Natural killer cell (primary cell): ENCODE measurements at regions of chr9 and their contacts with region 1.

Region 1: GRCh38 chr9:34376596-34377403 is at the start of gene MYORG:
- DNase-seq: peak; percentile 80 to 97
- ATAC-seq: peak; percentile 71 to 86 (median 75)
- H3K4me3 ChIP-seq: peak within 1 kb of the TSS; percentile 54
- H3K4me3 Mint-ChIP-seq: peak within 1 kb of the TSS; percentile 90
- H3K27ac ChIP-seq: peak within 1 kb of the TSS; percentile 32
- H3K27ac Mint-ChIP-seq: peak within 1 kb of the TSS; percentile 58 to 82
- H3K4me1 ChIP-seq: peaks cover 44% of the 10 kb centered on the region
- H3K4me1 Mint-ChIP-seq: peaks cover 43 to 49% of the 10 kb centered on the region in 2 donors
- H3K27me3 ChIP-seq: no peaks in the 10 kb centered on the region
- H3K27me3 Mint-ChIP-seq: peaks cover 0 to 6% of the 10 kb centered on the region in 2 donors
- CTCF ChIP-seq: no peak
- total RNA-seq, gene MYORG: 0.58 to 0.93 (median 0.92) TPM

Region 2: GRCh38 chr9:34048923-34049697 is 327.7 kb before region 1 on chr9:
- intact Hi-C with region 1: loop called (anchors 10 kb)
- DNase-seq: peak; percentile 98
- ATAC-seq: peak; percentile 83 to 94 (median 86)
- H3K4me3 ChIP-seq: peak overlapping the region; percentile 88
- H3K4me3 Mint-ChIP-seq: peak overlapping the region; percentile 96
- H3K27ac ChIP-seq: peak overlapping the region; percentile 82
- H3K27ac Mint-ChIP-seq: peak overlapping the region; percentile 99
- H3K4me1 ChIP-seq: peaks cover 16% of the 10 kb centered on the region
- H3K4me1 Mint-ChIP-seq: peaks cover 24 to 30% of the 10 kb centered on the region in 2 donors
- H3K27me3 ChIP-seq: no peaks in the 10 kb centered on the region
- H3K27me3 Mint-ChIP-seq: no peaks in the 10 kb centered on the region
- CTCF ChIP-seq: no peak

Region 3: GRCh38 chr9:34328987-34329832 is 47.6 kb before region 1 on chr9 and contains the starts of genes KIF24 and NUDT2:
- intact Hi-C with region 1: loop called (anchors 1 kb)
- DNase-seq: peak; percentile 92 to 99
- ATAC-seq: peak; percentile 90 to 97 (median 91)
- H3K4me3 ChIP-seq: peak within 1 kb of the TSS; percentile 96
- H3K4me3 Mint-ChIP-seq: peak within 1 kb of the TSS; percentile 94
- H3K27ac ChIP-seq: peak within 1 kb of the TSS; percentile 95
- H3K27ac Mint-ChIP-seq: peak within 1 kb of the TSS; percentile 95
- H3K4me1 ChIP-seq: peaks cover 17% of the 10 kb centered on the region
- H3K4me1 Mint-ChIP-seq: peaks cover 23 to 26% of the 10 kb centered on the region in 2 donors
- H3K27me3 ChIP-seq: no peaks in the 10 kb centered on the region
- H3K27me3 Mint-ChIP-seq: no peaks in the 10 kb centered on the region
- CTCF ChIP-seq: no peak
- total RNA-seq, gene KIF24: 0.28 to 0.50 (median 0.30) TPM
- total RNA-seq, gene NUDT2: 8.5 to 15.7 (median 9.4) TPM

Region 4: DNA sequence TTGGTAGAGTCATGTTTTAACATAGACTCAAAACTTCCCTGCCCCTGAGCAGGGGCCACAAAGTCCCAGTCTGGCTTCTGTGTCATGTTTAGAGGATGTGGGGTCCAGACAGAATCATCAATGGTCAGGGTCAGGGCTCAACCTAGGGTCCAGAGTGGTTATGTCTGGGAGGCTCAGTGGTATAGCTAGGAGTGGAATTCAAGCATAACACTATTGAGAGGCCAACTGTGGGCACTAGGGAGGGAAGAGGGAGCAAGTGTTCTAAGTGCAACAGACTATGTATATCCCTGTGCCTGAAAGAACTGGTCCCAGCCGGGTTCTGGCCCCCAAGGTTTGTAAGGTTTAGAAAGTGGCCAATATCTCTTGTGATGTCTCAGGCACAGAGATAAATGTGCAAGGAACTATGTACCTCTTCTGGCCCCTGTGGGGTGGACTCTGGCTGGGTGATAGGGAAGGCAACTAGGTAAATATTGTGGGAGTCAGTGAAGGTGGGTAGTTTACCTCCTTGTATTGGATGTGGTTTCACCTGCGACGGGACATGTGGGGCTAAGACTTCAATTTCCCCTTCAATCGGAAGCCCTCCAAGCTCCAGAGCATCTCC is 14.1 kb before region 1 on chr9:
- intact Hi-C with region 1: no loop called
- DNase-seq: no peak
- ATAC-seq: peak in 1 of 3 donors; percentile 17
- H3K4me3 ChIP-seq: no peak overlapping the region
- H3K4me3 Mint-ChIP-seq: no peak overlapping the region
- H3K27ac ChIP-seq: no peak overlapping the region
- H3K27ac Mint-ChIP-seq: no peak overlapping the region
- H3K4me1 ChIP-seq: no peaks in the 10 kb centered on the region
- H3K4me1 Mint-ChIP-seq: no peaks in the 10 kb centered on the region
- H3K27me3 ChIP-seq: no peaks in the 10 kb centered on the region
- H3K27me3 Mint-ChIP-seq: no peaks in the 10 kb centered on the region
- CTCF ChIP-seq: no peak

Region 5: DNA sequence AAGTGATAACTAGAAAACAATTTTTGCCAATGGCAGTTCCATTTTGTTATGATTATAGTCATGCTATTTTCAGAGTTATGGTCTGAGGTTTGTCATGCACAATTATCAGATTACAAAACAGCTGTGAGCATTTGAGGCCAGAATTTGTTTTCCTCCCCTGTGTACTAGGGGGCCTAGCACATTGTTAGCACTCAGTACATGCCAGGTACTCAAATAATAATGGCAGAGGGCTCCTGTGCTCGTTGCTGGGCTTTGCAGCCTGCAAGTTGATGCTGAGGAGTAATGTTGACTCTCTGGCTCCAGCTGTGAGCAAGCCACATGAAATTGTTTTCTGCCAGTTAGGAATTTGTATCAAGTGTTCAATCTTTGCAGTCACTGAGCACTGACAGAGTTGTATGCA is 88.7 kb after region 1 on chr9:
- intact Hi-C with region 1: no loop called
- DNase-seq: no peak
- ATAC-seq: no peak
- H3K4me3 ChIP-seq: no peak overlapping the region
- H3K4me3 Mint-ChIP-seq: no peak overlapping the region
- H3K27ac ChIP-seq: no peak overlapping the region
- H3K27ac Mint-ChIP-seq: no peak overlapping the region
- H3K4me1 ChIP-seq: no peaks in the 10 kb centered on the region
- H3K4me1 Mint-ChIP-seq: no peaks in the 10 kb centered on the region
- H3K27me3 ChIP-seq: no peaks in the 10 kb centered on the region
- H3K27me3 Mint-ChIP-seq: peaks cover 7 to 23% of the 10 kb centered on the region in 2 donors
- CTCF ChIP-seq: no peak